Mammary epithelial cell (primary cell): ENCODE measurements at regions of chr5 and their contacts with region 1.

Region 1: GRCh38 chr5:96718635-96719077 is 56.5 kb downstream of the CAST start:
- DNase-seq: peak; percentile 100
- H3K4me3 ChIP-seq: no peak overlapping the region
- H3K27ac ChIP-seq: peak overlapping the region; percentile 100
- H3K4me1 ChIP-seq: peaks cover 58% of the 10 kb centered on the region
- H3K27me3 ChIP-seq: no peaks in the 10 kb centered on the region
- CTCF ChIP-seq: no peak

Region 2: GRCh38 chr5:96503501-96504236 is 215.0 kb before region 1 on chr5:
- CTCF ChIA-PET with region 1: no interaction called
- dilution Hi-C with region 1: no loop called
- in situ Hi-C with region 1: no loop called
- intact Hi-C with region 1: no loop called
- DNase-seq: no peak
- H3K4me3 ChIP-seq: no peak overlapping the region
- H3K27ac ChIP-seq: no peak overlapping the region
- H3K4me1 ChIP-seq: no peaks in the 10 kb centered on the region
- H3K27me3 ChIP-seq: no peaks in the 10 kb centered on the region
- CTCF ChIP-seq: no peak

Region 3: DNA sequence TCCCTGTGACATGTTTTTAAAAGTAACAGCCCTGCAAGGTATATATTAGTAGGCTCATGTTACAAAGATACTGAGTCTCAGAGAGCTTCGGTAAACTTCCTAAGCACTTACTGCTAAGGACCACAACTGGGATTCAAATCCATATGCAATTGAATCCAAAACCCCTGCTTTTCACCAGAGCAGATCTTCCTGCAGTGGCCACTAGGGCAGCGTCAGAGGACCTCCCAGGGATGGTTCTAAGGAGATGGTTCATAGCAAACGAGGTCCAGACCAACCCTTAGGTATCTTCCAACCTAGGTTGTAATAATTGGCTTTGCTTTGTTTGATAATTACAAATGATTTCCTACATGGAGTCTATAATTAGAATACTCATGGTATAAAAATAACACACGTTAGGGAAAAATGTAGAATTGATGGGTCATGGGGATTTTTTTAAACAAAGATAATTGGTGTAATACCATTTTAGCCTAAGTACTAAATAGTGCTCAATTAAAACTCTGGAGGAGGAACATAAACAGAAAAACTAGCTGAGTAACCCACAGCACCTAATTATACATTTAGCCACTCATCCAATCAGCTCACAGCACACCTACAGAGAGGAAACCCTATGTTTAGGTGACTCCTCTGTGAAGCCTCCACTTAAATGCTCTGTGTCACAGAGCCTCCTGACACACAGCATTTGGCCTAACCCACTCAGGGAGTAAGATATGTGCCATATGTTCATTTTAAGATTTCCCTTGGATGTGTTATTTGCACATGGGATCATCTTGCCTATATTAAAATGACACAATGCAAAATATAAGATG is 66.5 kb before region 1 on chr5:
- CTCF ChIA-PET with region 1: no interaction called
- dilution Hi-C with region 1: loop called (anchors 5 kb)
- in situ Hi-C with region 1: no loop called
- intact Hi-C with region 1: no loop called
- DNase-seq: no peak
- H3K4me3 ChIP-seq: no peak overlapping the region
- H3K27ac ChIP-seq: no peak overlapping the region
- H3K4me1 ChIP-seq: peaks cover 55% of the 10 kb centered on the region
- H3K27me3 ChIP-seq: no peaks in the 10 kb centered on the region
- CTCF ChIP-seq: peak; percentile 31 to 48

Region 4: DNA sequence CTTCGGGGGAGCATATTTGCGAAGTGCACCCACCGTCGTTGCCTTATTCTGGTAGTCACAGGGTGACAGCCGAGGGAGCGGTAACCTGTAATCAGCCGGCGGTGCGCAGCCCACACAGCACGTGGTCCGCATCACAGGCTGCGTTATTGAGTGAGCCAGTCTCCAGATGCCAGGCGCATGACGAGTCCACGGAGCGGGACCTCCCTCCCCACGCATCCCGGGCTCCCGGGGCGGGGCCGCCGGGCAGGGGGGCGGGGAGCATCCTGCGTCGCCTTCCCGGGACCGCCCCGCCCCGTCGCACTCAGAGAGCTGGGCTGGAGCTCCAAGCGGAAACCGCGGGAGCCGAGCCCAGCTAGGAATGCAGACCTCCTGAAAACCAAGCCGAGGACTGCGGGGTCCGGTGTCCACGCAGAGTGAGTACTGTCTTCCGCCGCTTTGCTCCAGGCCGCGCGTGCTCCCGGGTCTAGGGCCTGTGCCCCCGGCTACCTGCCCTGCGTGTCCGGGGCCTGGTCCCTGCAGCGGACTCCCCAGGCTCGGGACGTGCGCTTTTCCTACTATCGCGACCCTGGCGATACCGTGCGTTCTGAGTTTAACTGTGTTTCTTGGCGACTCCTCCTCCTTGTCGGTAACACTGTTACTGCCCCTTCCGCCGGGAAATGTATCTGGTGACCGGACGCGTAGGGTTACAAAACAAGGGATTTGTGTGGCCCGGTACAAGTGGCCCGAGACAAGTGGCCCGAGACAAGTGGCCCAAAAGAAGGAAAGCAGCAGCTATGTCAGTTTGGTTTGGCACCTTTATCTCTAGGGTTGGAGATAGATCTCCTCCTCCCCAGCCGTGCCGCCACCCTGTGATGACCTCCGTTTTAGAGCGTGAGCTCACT is 15.9 kb before region 1 on chr5:
- CTCF ChIA-PET with region 1: interaction called, 4 read pairs
- dilution Hi-C with region 1: no loop called
- in situ Hi-C with region 1: no loop called
- intact Hi-C with region 1: loop called (anchors 1 kb)
- DNase-seq: peak; percentile 97
- H3K4me3 ChIP-seq: peak overlapping the region; percentile 63 to 79 (median 68)
- H3K27ac ChIP-seq: peak overlapping the region; percentile 99
- H3K4me1 ChIP-seq: peaks cover 54% of the 10 kb centered on the region
- H3K27me3 ChIP-seq: no peaks in the 10 kb centered on the region
- CTCF ChIP-seq: no peak

Region 5: GRCh38 chr5:96816411-96816939 is 97.8 kb after region 1 on chr5:
- CTCF ChIA-PET with region 1: no interaction called
- dilution Hi-C with region 1: no loop called
- in situ Hi-C with region 1: no loop called
- intact Hi-C with region 1: no loop called
- DNase-seq: no peak
- H3K4me3 ChIP-seq: no peak overlapping the region
- H3K27ac ChIP-seq: no peak overlapping the region
- H3K4me1 ChIP-seq: peaks cover 12% of the 10 kb centered on the region
- H3K27me3 ChIP-seq: no peaks in the 10 kb centered on the region
- CTCF ChIP-seq: no peak